ENCODE measurements at regions of chr20 and their contacts with region 1.

Region 1: GRCh38 chr20:13009682-13010406 is 1.1 kb downstream of the SPTLC3 start:
- DNase-seq: peak; percentile 63
- ATAC-seq: peak; percentile 66
- H3K4me3 ChIP-seq: peak overlapping the region; percentile 50 to 76 (median 67)
- H3K27ac ChIP-seq: peak overlapping the region; percentile 49
- H3K4me1 ChIP-seq: peaks cover 73% of the 10 kb centered on the region
- H3K27me3 ChIP-seq: no peaks in the 10 kb centered on the region; a peak in 1 of 5 replicates
- CTCF ChIP-seq: no peak
- EP300 ChIP-seq: no peak
- POLR2A ChIP-seq: no peak
- RAD21 ChIP-seq: no peak

Region 2: GRCh38 chr20:12989586-12990115 is 20.2 kb before region 1 on chr20:
- CTCF ChIA-PET with region 1: no interaction called
- POLR2A ChIA-PET with region 1: no interaction called
- in situ Hi-C with region 1: no loop called
- intact Hi-C with region 1: loop called (anchors 2 kb)
- DNase-seq: no peak
- ATAC-seq: no peak
- H3K4me3 ChIP-seq: no peak overlapping the region
- H3K27ac ChIP-seq: no peak overlapping the region
- H3K4me1 ChIP-seq: peaks cover 21% of the 10 kb centered on the region
- H3K27me3 ChIP-seq: no peaks in the 10 kb centered on the region
- CTCF ChIP-seq: no peak
- EP300 ChIP-seq: no peak
- POLR2A ChIP-seq: no peak
- RAD21 ChIP-seq: no peak

Region 3: GRCh38 chr20:13029687-13030510 is 20.1 kb after region 1 on chr20:
- CTCF ChIA-PET with region 1: no interaction called
- POLR2A ChIA-PET with region 1: interaction called, 3 read pairs
- in situ Hi-C with region 1: no loop called
- intact Hi-C with region 1: loop called (anchors 1 kb)
- DNase-seq: peak; percentile 80
- ATAC-seq: peak; percentile 65
- H3K4me3 ChIP-seq: no peak overlapping the region
- H3K27ac ChIP-seq: no peak overlapping the region
- H3K4me1 ChIP-seq: peaks cover 11% of the 10 kb centered on the region
- H3K27me3 ChIP-seq: no peaks in the 10 kb centered on the region
- CTCF ChIP-seq: no peak
- EP300 ChIP-seq: 0 out of 4 replicates have a peak, but pooled peaks of 1 of the 2 experiments have one; percentile 23
- POLR2A ChIP-seq: no peak
- RAD21 ChIP-seq: no peak

Region 4: DNA sequence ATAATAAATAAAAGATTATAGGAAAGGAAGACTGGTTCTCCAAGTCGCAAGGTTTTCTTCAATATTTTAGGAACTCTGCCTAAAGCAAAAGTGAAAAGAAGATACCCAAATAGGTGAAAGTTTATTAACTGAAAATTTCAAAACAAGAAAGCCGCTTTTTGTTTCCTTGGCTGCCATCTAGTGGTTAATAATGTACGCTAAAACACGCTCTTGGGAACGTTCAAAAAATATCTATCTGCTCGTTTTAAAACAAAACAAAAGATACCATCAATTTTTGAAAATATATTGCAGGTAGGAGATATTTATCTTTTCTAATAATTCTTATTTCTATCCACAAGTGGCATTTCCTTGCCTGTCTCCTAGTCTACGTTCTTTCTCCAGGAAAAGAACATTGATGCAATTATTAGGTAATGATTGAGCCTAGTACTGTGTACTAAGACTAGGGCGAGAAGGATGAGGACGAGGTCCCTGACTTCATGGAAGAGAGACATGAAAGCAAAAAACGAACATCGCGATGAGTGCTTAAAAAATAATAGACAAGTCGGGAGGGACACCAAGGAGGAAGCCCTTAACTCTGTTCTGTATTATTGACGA is 96.1 kb after region 1 on chr20:
- CTCF ChIA-PET with region 1: interaction called, 4 read pairs
- POLR2A ChIA-PET with region 1: no interaction called
- in situ Hi-C with region 1: no loop called
- intact Hi-C with region 1: loop called (anchors 1 kb)
- DNase-seq: peak; percentile 62
- ATAC-seq: no peak
- H3K4me3 ChIP-seq: no peak overlapping the region
- H3K27ac ChIP-seq: peak overlapping the region; percentile 28
- H3K4me1 ChIP-seq: peaks cover 36% of the 10 kb centered on the region
- H3K27me3 ChIP-seq: no peaks in the 10 kb centered on the region
- CTCF ChIP-seq: peak; percentile 79
- EP300 ChIP-seq: no peak
- POLR2A ChIP-seq: no peak
- RAD21 ChIP-seq: peak; percentile 88